Upper lobe of right lung (tissue), 1 donor: ENCODE measurements at regions of chr22 and their contacts with region 1.

Region 1: GRCh38 chr22:44697423-44698141 is 4.4 kb upstream of the PRR5 start:
- DNase-seq: peak; percentile 92
- ATAC-seq: peak; percentile 75
- H3K4me3 ChIP-seq: no peak overlapping the region
- H3K27ac ChIP-seq: no peak overlapping the region
- H3K4me1 ChIP-seq: peaks cover 17% of the 10 kb centered on the region
- H3K27me3 ChIP-seq: no peaks in the 10 kb centered on the region
- CTCF ChIP-seq: peak; percentile 97

Region 2: DNA sequence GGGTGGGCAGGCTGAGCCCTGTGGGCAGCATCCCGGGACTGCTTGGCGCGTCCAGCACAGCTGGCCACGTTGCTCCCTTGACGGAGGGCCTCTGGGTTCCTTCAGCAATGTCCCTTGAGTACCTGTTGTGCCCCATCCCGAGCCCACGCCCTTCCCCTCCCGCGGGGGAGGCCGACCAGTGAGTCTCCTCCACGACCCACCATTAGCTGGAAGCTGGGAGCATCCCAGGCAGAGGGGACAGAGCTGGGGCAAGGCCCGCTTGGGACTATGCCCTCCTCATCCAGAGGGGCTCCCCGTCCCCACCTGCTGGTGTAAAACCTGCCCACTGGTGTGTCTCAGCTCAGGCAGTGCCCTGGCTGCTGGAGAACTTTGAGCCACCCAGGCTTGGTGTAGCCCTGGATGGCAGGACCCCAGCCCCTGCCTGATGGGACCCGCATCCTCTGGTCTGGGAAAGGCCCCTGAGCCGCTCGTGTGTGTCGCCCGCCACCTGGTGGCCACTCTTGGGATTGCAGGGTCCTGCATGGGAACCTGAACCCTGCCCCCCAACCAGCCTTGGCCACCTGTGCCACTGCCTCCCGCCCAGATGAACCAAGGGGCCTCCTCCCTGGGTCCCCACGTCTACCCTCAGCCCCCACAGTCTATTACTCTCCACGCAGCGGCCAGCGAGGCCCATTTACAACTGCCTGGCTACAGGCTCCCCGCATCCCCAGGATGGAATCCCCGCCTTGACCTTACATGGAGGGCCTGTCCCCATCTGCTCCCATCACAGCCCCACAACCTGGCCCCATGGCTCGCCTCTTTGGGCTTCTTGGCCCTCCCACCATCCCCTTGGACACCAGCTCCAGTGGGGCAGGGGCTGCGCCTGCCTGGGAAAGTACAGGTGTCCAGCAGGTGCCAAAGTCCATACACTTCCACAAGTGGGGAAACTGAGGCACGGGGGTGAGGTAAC is 38.2 kb after region 1 on chr22:
- intact Hi-C with region 1: loop called (anchors 2 kb)
- DNase-seq: peak; percentile 89
- ATAC-seq: peak; percentile 73
- H3K4me3 ChIP-seq: no peak overlapping the region
- H3K27ac ChIP-seq: no peak overlapping the region
- H3K4me1 ChIP-seq: peaks cover 7% of the 10 kb centered on the region
- H3K27me3 ChIP-seq: no peaks in the 10 kb centered on the region
- CTCF ChIP-seq: peak; percentile 99